ENCODE measurements at regions of chr13 and their contacts with region 1.

Region 1: GRCh38 chr13:25886438-25887214 is 165.2 kb downstream of the SHISA2 start:
- DNase-seq: peak; percentile 14
- H3K4me3 Mint-ChIP-seq: no peak overlapping the region
- H3K27ac Mint-ChIP-seq: peak overlapping the region; percentile 75
- H3K4me1 Mint-ChIP-seq: peaks cover 71% of the 10 kb centered on the region
- H3K27me3 Mint-ChIP-seq: peaks cover 5% of the 10 kb centered on the region

Region 2: DNA sequence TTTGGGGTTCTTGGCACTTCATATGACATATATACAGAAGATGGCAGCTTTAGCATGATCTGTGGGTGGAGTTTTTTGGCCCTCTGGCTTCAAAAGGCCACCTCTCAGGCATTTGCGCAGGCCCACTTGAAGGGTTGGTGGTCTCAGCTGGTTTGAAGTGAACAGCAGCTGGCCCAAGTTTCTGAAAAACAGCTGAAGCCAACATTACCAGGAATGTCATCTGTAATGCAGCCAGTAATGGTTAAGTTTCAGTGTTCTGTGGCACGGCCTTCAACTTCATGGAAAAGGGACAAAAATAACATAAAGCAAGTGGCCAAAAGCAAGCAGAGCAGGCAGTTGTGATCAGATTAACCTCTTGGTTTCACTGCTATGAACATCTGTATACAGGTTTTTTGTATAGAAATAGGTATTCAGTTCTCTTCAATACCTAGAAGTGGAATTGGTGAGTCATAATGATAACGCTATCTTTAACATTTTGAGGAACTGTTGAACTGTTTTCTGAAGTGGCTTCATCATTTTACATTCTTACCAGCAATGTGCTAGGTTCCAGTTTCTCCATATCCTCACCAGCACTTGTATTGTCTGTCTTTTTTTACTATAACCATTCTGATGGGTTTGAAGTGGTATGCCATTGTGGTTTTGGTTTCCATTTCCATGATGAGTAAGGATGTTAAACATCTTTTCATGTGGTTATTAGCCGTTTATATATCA is 80.2 kb before region 1 on chr13:
- intact Hi-C with region 1: loop called (anchors 1 kb)
- DNase-seq: peak; percentile 11
- H3K4me3 Mint-ChIP-seq: peak overlapping the region; percentile 61
- H3K27ac Mint-ChIP-seq: peak overlapping the region; percentile 87
- H3K4me1 Mint-ChIP-seq: peaks cover 28% of the 10 kb centered on the region
- H3K27me3 Mint-ChIP-seq: no peaks in the 10 kb centered on the region

Region 3: GRCh38 chr13:25874907-25875306 is 11.7 kb before region 1 on chr13:
- intact Hi-C with region 1: loop called (anchors 1 kb)
- DNase-seq: peak; percentile 44
- H3K4me3 Mint-ChIP-seq: peak overlapping the region; percentile 62
- H3K27ac Mint-ChIP-seq: peak overlapping the region; percentile 87
- H3K4me1 Mint-ChIP-seq: peaks cover 67% of the 10 kb centered on the region
- H3K27me3 Mint-ChIP-seq: peaks cover 2% of the 10 kb centered on the region

Region 4: GRCh38 chr13:26011996-26012821 is 125.6 kb after region 1 on chr13:
- intact Hi-C with region 1: loop called (anchors 1 kb)
- DNase-seq: peak; percentile 56
- H3K4me3 Mint-ChIP-seq: peak overlapping the region; percentile 72
- H3K27ac Mint-ChIP-seq: peak overlapping the region; percentile 29
- H3K4me1 Mint-ChIP-seq: peaks cover 17% of the 10 kb centered on the region
- H3K27me3 Mint-ChIP-seq: no peaks in the 10 kb centered on the region

Region 5: DNA sequence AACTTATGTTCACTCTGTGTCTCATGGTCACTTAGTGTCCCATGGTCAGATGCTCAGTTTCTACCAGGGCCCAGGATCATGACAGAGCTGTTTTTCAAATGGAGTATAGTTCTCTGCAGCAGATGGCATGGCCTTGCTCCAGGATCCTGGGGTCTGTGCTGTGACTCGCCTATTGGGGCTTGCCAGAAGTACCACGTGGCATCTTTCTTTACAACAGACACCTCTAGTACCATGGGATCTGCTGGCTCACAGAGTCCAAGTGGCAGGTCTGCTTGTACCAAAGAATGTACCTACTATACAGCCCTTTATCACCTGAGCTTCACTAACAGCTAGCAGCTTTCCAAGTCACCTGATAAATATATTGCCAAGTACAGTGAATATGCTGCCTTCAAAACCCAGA is 341.5 kb after region 1 on chr13:
- intact Hi-C with region 1: no loop called
- DNase-seq: no peak
- H3K4me3 Mint-ChIP-seq: no peak overlapping the region
- H3K27ac Mint-ChIP-seq: no peak overlapping the region
- H3K4me1 Mint-ChIP-seq: peaks cover 1% of the 10 kb centered on the region
- H3K27me3 Mint-ChIP-seq: no peaks in the 10 kb centered on the region

Measured in activated T-helper 1 cell treated with anti-CD3 and anti-CD28 coated beads, Interleukin-12 subunit alpha, Interleukin-12 subunit beta, Interleukin-2, Interleukin-4 antibody, amounts not matched to agents 30 ng/mL and 10 ng/mL and 1 ng/mL, durations not matched to agents 14 hours and 24 hours and 36 hours (primary cell).